Activated T-helper 1 cell treated with anti-CD3 and anti-CD28 coated beads, Interleukin-12 subunit alpha, Interleukin-12 subunit beta, Interleukin-2, Interleukin-4 antibody, amounts not matched to agents 30 ng/mL and 10 ng/mL and 1 ng/mL, durations not matched to agents 14 hours and 24 hours and 36 hours (primary cell): ENCODE measurements at regions of chr1 and their contacts with region 1.

Region 1: DNA sequence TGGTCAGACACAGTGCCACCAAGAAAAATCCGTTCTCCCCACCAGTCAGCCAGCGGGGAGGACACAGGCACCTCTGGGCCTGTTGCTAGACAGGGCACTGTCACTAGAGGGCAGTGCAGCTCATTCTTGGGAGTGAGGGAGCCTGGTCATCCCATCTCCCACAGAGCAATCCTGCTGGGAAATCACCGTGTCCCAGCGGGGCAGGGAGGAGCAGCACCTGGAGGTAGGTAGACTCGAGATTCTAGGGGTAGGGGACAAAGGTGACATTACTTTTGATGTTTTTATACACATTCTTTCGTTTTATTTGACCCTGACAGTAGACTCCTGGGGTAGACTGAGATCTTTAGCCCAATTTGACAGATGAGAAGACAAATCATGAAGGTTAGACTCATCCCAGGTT is 6.7 kb upstream of the CAMK1G start:
- DNase-seq: peak; percentile 49
- H3K4me3 Mint-ChIP-seq: no peak overlapping the region
- H3K27ac Mint-ChIP-seq: no peak overlapping the region
- H3K4me1 Mint-ChIP-seq: peaks cover 7% of the 10 kb centered on the region
- H3K27me3 Mint-ChIP-seq: peaks cover 25% of the 10 kb centered on the region

Region 2: DNA sequence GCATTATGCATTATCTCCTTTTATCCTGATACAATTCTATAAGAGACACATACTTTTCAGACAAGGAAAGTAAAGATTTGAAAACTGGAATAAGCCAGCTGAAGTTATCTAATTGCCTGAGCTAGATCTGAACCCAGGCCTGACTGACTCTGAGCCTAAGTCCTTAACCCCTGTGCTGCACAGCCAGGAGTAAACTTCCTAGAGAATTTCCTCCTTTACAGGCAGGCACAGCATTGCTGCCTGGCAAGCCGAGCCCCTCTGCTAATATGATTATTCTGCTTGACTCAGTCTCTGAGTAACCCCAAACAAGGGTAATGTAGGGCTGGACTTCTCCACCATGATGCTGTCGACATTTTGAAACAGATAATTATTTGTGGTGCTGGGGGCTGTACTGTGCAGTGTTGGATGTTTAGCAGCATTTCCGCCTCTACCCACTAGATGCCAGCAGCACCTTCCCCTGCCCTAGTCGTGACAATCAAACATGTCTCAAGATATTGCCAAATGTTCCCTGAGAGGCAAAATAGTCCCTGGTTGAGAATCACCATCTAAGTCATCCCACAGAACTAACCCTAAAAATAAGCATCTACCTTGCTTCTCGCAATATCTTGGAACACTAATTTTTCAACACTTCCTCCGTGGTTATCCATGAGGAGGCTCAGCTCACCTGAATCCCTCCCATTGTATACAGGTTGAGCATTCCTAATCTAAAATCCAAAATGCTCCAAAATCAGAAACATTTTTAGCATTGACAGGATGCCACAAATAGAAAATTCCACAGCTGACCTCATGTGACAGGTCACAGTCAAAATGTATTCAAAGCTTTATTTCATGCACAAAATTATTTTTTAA is 25.2 kb after region 1 on chr1:
- intact Hi-C with region 1: loop called (anchors 2 kb)
- DNase-seq: peak; percentile 14
- H3K4me3 Mint-ChIP-seq: no peak overlapping the region
- H3K27ac Mint-ChIP-seq: no peak overlapping the region
- H3K4me1 Mint-ChIP-seq: peaks cover 19% of the 10 kb centered on the region
- H3K27me3 Mint-ChIP-seq: peaks cover 26% of the 10 kb centered on the region

Region 3: DNA sequence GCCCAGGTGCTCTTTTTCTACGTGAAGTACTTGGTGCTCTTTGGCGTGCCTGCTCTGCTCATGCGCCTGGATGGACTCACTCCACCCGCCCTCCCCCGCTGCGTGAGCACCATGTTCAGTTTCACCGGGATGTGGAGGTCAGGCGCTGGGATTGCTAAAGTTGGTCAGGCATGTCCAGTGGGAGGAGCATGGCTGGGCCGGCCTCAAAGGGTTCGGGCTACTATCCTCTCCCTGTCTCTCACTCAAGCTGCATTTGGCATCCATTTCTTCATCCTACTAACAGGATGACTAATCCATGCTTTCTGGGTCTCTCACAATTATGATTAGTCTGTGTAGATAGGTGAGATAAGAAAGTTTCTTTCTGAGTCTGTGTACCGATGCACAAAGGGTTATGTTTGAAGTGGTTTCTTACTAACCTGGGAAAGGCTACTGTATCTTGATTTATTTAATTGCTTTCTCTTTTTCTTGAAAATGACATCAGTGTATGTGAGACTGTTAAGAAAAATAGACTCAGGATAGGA is 887.8 kb after region 1 on chr1:
- intact Hi-C with region 1: no loop called
- DNase-seq: no peak
- H3K4me3 Mint-ChIP-seq: no peak overlapping the region
- H3K27ac Mint-ChIP-seq: no peak overlapping the region
- H3K4me1 Mint-ChIP-seq: peaks cover 19% of the 10 kb centered on the region
- H3K27me3 Mint-ChIP-seq: peaks cover 2% of the 10 kb centered on the region